ENCODE measurements at regions of chr15 and their contacts with region 1.

Region 1: GRCh38 chr15:77107531-77108355 is 36.8 kb upstream of the TSPAN3 start:
- DNase-seq: peak; percentile 38 to 72
- H3K4me3 ChIP-seq: no peak overlapping the region
- H3K27ac ChIP-seq: no peak overlapping the region
- H3K4me1 ChIP-seq: no peaks in the 10 kb centered on the region
- H3K27me3 ChIP-seq: no peaks in the 10 kb centered on the region
- CTCF ChIP-seq: peak; percentile 88 to 93 (median 91)
- EP300 ChIP-seq: no peak
- POLR2A ChIP-seq: no peak
- RAD21 ChIP-seq: peak; percentile 93 to 96

Region 2: DNA sequence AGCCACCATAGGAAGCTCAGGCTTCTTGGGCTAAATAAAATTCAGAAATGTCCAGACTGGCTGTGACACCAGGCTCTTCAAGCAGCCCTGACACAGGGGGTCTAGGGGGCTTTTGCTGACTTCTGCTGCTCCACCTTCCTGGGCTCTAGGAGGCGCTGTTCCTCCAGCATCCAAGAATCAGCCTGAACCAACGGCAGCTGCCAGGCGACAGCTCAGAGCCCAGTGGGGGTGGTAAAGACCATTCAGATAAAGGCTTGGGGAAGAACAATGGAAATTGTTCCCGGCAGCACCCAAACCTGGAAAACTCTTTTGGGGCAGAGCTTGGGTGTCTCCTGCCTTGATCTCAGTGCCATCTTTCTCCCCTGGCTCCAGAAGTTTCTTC is 134.4 kb before region 1 on chr15:
- CTCF ChIA-PET with region 1: interaction called, 17 read pairs
- POLR2A ChIA-PET with region 1: no interaction called
- DNase-seq: peak; percentile 54 to 85
- H3K4me3 ChIP-seq: no peak overlapping the region; a peak in 1 of 8 replicates
- H3K27ac ChIP-seq: no peak overlapping the region
- H3K4me1 ChIP-seq: peaks cover 0 to 2% (median 0%) of the 10 kb centered on the region in 4 experiments; a peak in 3 of 7 replicates
- H3K27me3 ChIP-seq: no peaks in the 10 kb centered on the region; a peak in 1 of 7 replicates
- CTCF ChIP-seq: peak; percentile 83 to 87 (median 87)
- EP300 ChIP-seq: peak in 1 of 2 experiments; percentile 69; a peak in 1 of 3 replicates
- POLR2A ChIP-seq: no peak
- RAD21 ChIP-seq: peak; percentile 89 to 91

Region 3: GRCh38 chr15:77034695-77035489 is 72.9 kb before region 1 on chr15:
- CTCF ChIA-PET with region 1: interaction called, 16 read pairs
- POLR2A ChIA-PET with region 1: no interaction called
- DNase-seq: peak in 1 of 2 experiments; percentile 91
- H3K4me3 ChIP-seq: no peak overlapping the region
- H3K27ac ChIP-seq: no peak overlapping the region
- H3K4me1 ChIP-seq: peaks cover 0 to 21% (median 13%) of the 10 kb centered on the region in 4 experiments; a peak in 5 of 7 replicates
- H3K27me3 ChIP-seq: no peaks in the 10 kb centered on the region; a peak in 1 of 7 replicates
- CTCF ChIP-seq: peak in 2 of 3 experiments; percentile 81 to 84; a peak in 3 of 4 replicates
- EP300 ChIP-seq: no peak
- POLR2A ChIP-seq: no peak
- RAD21 ChIP-seq: peak; percentile 52 to 67

Region 4: GRCh38 chr15:77053709-77054108 is 54.0 kb before region 1 on chr15:
- CTCF ChIA-PET with region 1: no interaction called
- POLR2A ChIA-PET with region 1: no interaction called
- DNase-seq: no peak
- H3K4me3 ChIP-seq: no peak overlapping the region
- H3K27ac ChIP-seq: no peak overlapping the region
- H3K4me1 ChIP-seq: peaks cover 0 to 5% (median 2%) of the 10 kb centered on the region in 4 experiments; a peak in 3 of 7 replicates
- H3K27me3 ChIP-seq: no peaks in the 10 kb centered on the region
- CTCF ChIP-seq: no peak
- EP300 ChIP-seq: no peak
- POLR2A ChIP-seq: no peak
- RAD21 ChIP-seq: no peak

Region 5: GRCh38 chr15:77094397-77095030 is 13.2 kb before region 1 on chr15:
- CTCF ChIA-PET with region 1: interaction called, 101 read pairs
- POLR2A ChIA-PET with region 1: interaction called, 4 read pairs
- DNase-seq: peak in 1 of 2 experiments; percentile 74
- H3K4me3 ChIP-seq: no peak overlapping the region
- H3K27ac ChIP-seq: no peak overlapping the region
- H3K4me1 ChIP-seq: no peaks in the 10 kb centered on the region
- H3K27me3 ChIP-seq: no peaks in the 10 kb centered on the region
- CTCF ChIP-seq: peak; percentile 79 to 82 (median 80)
- EP300 ChIP-seq: no peak
- POLR2A ChIP-seq: no peak
- RAD21 ChIP-seq: peak; percentile 62 to 69

Region 6: DNA sequence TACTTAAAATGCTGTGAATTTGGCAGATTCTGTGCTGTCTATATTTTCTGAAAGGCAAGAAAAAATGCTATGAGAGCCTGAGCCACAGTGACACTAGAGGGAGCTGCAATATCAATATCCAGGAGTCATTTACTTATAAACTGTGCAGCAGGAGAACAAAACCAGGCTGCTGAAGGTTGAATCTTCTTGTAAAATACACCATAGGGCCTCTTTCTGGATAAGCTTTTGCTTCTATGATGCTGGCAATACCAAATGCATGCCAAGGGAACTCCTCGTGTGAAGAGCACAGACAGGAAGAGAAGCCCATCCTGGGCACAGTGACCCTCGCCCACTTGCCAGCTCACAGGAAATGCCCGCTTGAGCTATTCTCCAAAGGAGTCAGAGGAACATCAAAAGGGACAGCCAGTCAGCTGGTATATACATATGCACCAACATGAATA is 11.2 kb after region 1 on chr15:
- CTCF ChIA-PET with region 1: interaction called, 48 read pairs
- POLR2A ChIA-PET with region 1: no interaction called
- DNase-seq: no peak
- H3K4me3 ChIP-seq: no peak overlapping the region
- H3K27ac ChIP-seq: no peak overlapping the region
- H3K4me1 ChIP-seq: peaks cover 0 to 4% (median 0%) of the 10 kb centered on the region in 4 experiments; a peak in 4 of 7 replicates
- H3K27me3 ChIP-seq: no peaks in the 10 kb centered on the region
- CTCF ChIP-seq: peak in 2 of 3 experiments; percentile 60 to 66; a peak in 2 of 4 replicates
- EP300 ChIP-seq: no peak
- POLR2A ChIP-seq: no peak
- RAD21 ChIP-seq: peak; percentile 81 to 85

Region 7: DNA sequence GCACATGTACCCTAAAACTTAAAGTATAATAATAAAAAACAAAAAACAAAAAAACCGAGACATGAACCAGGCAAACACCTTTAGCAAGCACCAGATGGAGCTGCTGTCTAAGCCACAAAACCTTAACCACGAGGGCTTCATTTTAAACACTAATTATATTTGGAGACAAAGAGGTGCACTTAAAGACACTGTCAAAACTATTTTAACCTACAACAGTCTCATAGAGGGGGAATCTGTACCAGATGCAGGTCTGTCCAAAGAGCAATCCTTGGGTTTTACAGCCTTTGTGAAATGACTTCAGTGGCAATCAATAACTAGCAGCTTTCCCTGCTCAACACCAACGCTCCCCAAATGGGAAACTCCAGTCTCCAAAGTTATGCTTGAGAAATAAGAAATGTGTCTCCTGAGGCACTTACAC is 78.9 kb after region 1 on chr15:
- CTCF ChIA-PET with region 1: interaction called, 21 read pairs
- POLR2A ChIA-PET with region 1: no interaction called
- DNase-seq: no peak
- H3K4me3 ChIP-seq: no peak overlapping the region
- H3K27ac ChIP-seq: no peak overlapping the region
- H3K4me1 ChIP-seq: no peaks in the 10 kb centered on the region
- H3K27me3 ChIP-seq: no peaks in the 10 kb centered on the region
- CTCF ChIP-seq: peak in 2 of 3 experiments; percentile 42 to 65; a peak in 3 of 4 replicates
- EP300 ChIP-seq: no peak
- POLR2A ChIP-seq: no peak
- RAD21 ChIP-seq: peak; percentile 85 to 87

Region 8: DNA sequence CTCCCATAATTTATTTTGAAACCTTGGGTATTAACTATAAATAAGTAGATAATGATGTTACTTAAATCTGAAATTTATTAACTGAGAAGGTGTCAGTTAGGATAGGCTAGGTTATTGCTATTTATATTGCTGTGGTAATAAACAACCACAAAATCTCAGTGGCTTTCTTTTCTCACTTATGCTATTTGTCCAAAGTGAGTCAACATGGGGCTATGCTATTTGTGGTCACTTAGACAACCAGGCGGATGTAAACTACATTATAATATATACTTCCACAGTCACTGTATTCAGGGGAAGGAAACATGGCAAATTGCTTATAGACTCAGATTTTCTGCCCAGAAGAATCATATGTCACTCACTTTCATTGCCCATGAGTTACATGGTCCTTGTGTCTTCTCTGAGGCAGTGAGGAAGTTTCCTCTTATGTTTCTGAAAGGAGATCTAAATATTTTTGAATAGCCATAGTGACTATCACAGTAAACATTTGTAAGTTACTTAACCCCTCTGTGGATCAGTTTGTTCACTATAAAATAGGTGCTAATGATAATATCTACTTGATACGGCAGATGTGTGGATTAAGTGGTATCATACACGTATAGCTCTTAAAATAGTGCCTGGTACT is 332.7 kb after region 1 on chr15:
- CTCF ChIA-PET with region 1: no interaction called
- POLR2A ChIA-PET with region 1: no interaction called
- DNase-seq: no peak
- H3K4me3 ChIP-seq: no peak overlapping the region
- H3K27ac ChIP-seq: no peak overlapping the region
- H3K4me1 ChIP-seq: peaks cover 0 to 4% (median under 1%) of the 10 kb centered on the region in 4 experiments; a peak in 2 of 7 replicates
- H3K27me3 ChIP-seq: no peaks in the 10 kb centered on the region
- CTCF ChIP-seq: no peak
- EP300 ChIP-seq: no peak
- POLR2A ChIP-seq: no peak
- RAD21 ChIP-seq: no peak